T-cell (primary cell): ENCODE measurements at regions of chr10 and their contacts with region 1.

Region 1: DNA sequence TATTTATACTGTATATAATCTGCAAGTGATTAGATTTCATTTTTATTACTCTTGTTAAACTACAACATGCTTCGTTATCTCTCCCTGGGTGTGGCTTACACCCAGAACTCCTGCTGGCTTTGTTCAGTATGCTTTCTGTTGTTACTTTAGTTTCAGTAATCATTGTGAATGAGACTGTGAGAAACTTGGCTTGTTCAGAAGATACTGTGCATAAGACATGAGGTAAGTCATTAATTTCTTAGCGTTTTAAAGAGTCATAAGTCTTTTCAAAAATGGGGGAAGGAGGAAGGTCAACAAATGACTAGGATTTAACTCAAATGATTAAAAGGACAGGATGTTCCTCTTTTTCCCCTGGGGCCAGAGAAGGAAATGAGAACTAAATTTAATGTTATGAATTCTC is 11.6 kb upstream of the ADD3 start:
- DNase-seq: no peak
- ATAC-seq: no peak
- H3K4me3 ChIP-seq: no peak overlapping the region
- H3K4me3 Mint-ChIP-seq: no peak overlapping the region
- H3K27ac ChIP-seq: no peak overlapping the region
- H3K27ac Mint-ChIP-seq: no peak overlapping the region
- H3K4me1 ChIP-seq: peaks cover 0 to 2% of the 10 kb centered on the region in 2 experiments
- H3K4me1 Mint-ChIP-seq: peaks cover 5 to 26% (median 14%) of the 10 kb centered on the region in 3 donors
- H3K27me3 ChIP-seq: no peaks in the 10 kb centered on the region
- H3K27me3 Mint-ChIP-seq: no peaks in the 10 kb centered on the region

Region 2: DNA sequence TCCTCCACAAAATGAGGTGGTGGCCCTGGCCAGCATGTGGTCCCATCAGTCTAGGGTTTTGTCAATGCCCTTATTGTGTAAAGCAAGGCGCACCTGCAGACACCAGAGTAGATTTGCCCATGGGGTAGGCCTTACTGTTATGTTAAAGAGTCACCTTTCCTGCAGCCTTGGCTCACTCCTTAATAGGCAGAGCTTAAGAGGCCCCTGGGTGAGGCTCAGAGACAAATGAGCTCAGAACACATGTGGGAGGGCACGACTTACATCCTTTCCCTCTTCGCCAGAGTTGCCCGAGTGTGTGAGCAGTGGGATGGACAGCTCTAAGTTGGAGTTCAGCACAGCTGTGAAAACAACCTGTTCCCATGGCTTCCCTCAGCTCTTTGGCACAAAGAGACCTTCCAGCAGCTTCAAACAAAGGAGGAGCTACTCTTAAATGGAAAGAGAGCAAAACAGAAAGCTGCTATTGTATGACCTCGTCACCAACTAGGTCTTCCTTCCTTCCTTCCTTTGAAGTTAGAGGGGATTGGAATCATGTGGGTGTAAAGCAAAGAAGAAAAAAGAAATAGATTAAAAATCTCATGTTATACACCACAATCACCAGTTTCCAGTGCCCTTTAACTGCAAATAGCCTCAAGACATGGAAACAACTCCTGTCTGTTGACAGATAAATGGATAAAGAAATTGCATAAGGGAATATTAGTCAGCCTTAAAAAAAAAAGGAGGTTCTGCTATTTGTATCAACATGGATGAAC is 61.1 kb before region 1 on chr10:
- CTCF ChIA-PET with region 1: interaction called, 4 read pairs
- POLR2A ChIA-PET with region 1: interaction called in 1 of 2 experiments, 10 read pairs
- DNase-seq: peak in 6 of 35 experiments; percentile 2 to 43 (median 20)
- ATAC-seq: peak; percentile 33 to 67 (median 44)
- H3K4me3 ChIP-seq: peak overlapping the region in 1 of 2 donors; percentile 10
- H3K4me3 Mint-ChIP-seq: peak overlapping the region; percentile 68 to 79 (median 78)
- H3K27ac ChIP-seq: peak overlapping the region; percentile 59
- H3K27ac Mint-ChIP-seq: peak overlapping the region; percentile 99
- H3K4me1 ChIP-seq: peaks cover 32 to 51% of the 10 kb centered on the region in 2 experiments
- H3K4me1 Mint-ChIP-seq: peaks cover 69 to 74% (median 74%) of the 10 kb centered on the region in 3 donors
- H3K27me3 ChIP-seq: no peaks in the 10 kb centered on the region
- H3K27me3 Mint-ChIP-seq: no peaks in the 10 kb centered on the region

Region 3: GRCh38 chr10:109963439-109963838 is 32.8 kb before region 1 on chr10:
- CTCF ChIA-PET with region 1: no interaction called
- POLR2A ChIA-PET with region 1: no interaction called
- DNase-seq: no peak
- ATAC-seq: no peak
- H3K4me3 ChIP-seq: no peak overlapping the region
- H3K4me3 Mint-ChIP-seq: no peak overlapping the region
- H3K27ac ChIP-seq: no peak overlapping the region
- H3K27ac Mint-ChIP-seq: no peak overlapping the region
- H3K4me1 ChIP-seq: no peaks in the 10 kb centered on the region
- H3K4me1 Mint-ChIP-seq: peaks cover 0 to 2% (median 0%) of the 10 kb centered on the region in 3 donors
- H3K27me3 ChIP-seq: no peaks in the 10 kb centered on the region
- H3K27me3 Mint-ChIP-seq: no peaks in the 10 kb centered on the region

Region 4: GRCh38 chr10:110016039-110016438 is 19.8 kb after region 1 on chr10:
- CTCF ChIA-PET with region 1: interaction called in 1 of 2 experiments, 12 read pairs
- POLR2A ChIA-PET with region 1: no interaction called
- DNase-seq: peak in 1 of 35 experiments; percentile 45
- ATAC-seq: no peak
- H3K4me3 ChIP-seq: no peak overlapping the region
- H3K4me3 Mint-ChIP-seq: peak overlapping the region in 1 of 3 donors; percentile 37
- H3K27ac ChIP-seq: no peak overlapping the region
- H3K27ac Mint-ChIP-seq: peak overlapping the region; percentile 71 to 86
- H3K4me1 ChIP-seq: peaks cover 30 to 60% of the 10 kb centered on the region in 2 experiments
- H3K4me1 Mint-ChIP-seq: peaks cover 88 to 90% (median 90%) of the 10 kb centered on the region in 3 donors
- H3K27me3 ChIP-seq: no peaks in the 10 kb centered on the region
- H3K27me3 Mint-ChIP-seq: no peaks in the 10 kb centered on the region

Region 5: GRCh38 chr10:110103921-110104461 is 107.8 kb after region 1 on chr10:
- CTCF ChIA-PET with region 1: no interaction called
- POLR2A ChIA-PET with region 1: no interaction called
- DNase-seq: no peak
- ATAC-seq: peak in 2 of 4 experiments; percentile 30 to 37
- H3K4me3 ChIP-seq: no peak overlapping the region
- H3K4me3 Mint-ChIP-seq: no peak overlapping the region
- H3K27ac ChIP-seq: no peak overlapping the region
- H3K27ac Mint-ChIP-seq: peak overlapping the region; percentile 68 to 86
- H3K4me1 ChIP-seq: peaks cover 0 to 4% of the 10 kb centered on the region in 2 experiments
- H3K4me1 Mint-ChIP-seq: peaks cover 54 to 73% (median 71%) of the 10 kb centered on the region in 3 donors
- H3K27me3 ChIP-seq: no peaks in the 10 kb centered on the region
- H3K27me3 Mint-ChIP-seq: no peaks in the 10 kb centered on the region